ENCODE measurements at regions of chr14 and their contacts with region 1.

Region 1: GRCh38 chr14:55976219-55976618 is 142.0 kb upstream of the PELI2 start:
- DNase-seq: peak; percentile 76 to 81 (median 79)
- ATAC-seq: peak; percentile 97
- H3K4me3 ChIP-seq: no peak overlapping the region
- H3K4me1 ChIP-seq: peaks cover 6% of the 10 kb centered on the region
- CTCF ChIP-seq: no peak

Region 2: DNA sequence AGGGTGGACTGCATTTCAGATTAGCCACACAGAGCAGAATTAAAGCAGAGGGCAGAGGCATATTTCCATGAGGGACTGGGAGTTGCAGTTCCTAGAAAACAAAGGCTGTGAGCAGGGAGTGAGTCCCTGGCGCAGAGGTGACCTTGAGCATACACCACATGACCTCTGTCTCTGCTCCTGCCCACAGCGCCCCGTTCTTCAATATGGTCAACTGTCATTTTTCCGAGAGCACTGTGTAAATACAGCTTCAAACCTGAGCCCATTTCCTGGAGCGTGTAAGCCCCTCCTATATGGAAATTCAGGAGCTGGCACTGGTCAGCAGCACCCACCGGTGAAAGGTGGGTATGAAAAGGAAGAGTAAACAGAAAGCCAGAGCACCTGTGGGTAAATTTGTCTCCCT is 50.2 kb before region 1 on chr14:
- intact Hi-C with region 1: loop called in 1 of 2 experiments (anchors 2 kb)
- DNase-seq: peak in 2 of 3 donors; percentile 52 to 57
- ATAC-seq: peak; percentile 85
- H3K4me3 ChIP-seq: no peak overlapping the region
- H3K4me1 ChIP-seq: peaks cover 13% of the 10 kb centered on the region
- CTCF ChIP-seq: no peak

Measured in mucosa of descending colon (tissue), 3 donors.